Prostate gland (tissue), 2 donors: ENCODE measurements at regions of chr6 and their contacts with region 1.

Region 1: DNA sequence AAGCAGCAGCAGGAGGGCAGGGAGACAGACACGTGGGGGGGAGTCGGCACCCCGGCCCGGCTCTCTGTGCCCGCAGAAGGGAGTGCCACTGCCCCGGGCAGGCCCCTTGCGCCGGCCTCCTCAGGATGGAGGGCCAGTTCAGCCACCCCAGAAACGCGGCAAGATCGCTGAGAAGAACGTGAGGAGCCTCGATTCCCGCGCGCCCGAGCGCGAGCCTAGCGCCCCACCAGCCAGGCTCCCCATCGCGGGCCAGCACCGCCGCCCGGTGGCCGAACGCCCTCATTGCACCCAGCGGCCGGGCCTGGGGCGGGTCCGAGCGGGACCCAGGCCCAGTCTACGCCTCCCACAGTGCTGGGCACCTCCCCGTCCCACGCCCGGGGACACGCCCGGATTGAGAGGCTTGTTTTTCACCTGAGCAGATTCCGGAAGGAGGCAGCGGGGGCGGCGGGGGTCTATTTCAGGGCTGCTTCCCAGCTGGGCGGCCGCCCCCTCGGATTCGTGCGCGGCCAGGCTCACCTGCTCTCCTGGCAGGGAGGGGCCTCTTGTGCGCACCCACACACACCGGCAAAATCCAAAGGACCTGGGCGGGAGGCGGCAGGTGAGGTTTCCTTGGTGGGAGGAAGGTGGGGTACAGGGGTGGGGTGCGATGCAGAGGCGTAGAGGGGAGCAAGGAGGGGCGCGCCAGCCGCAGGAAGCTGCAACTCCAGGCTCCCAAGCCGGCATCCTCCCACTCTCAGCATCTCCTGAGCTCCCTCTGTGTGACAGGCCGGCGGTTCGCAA is 9.0 kb upstream of the GRM4 start:
- DNase-seq: no peak
- H3K4me3 ChIP-seq: no peak overlapping the region
- H3K27ac ChIP-seq: no peak overlapping the region
- H3K4me1 ChIP-seq: no peaks in the 10 kb centered on the region
- H3K27me3 ChIP-seq: no peaks in the 10 kb centered on the region
- CTCF ChIP-seq: peak; percentile 84 to 98 (median 97)
- POLR2A ChIP-seq: no peak

Region 2: DNA sequence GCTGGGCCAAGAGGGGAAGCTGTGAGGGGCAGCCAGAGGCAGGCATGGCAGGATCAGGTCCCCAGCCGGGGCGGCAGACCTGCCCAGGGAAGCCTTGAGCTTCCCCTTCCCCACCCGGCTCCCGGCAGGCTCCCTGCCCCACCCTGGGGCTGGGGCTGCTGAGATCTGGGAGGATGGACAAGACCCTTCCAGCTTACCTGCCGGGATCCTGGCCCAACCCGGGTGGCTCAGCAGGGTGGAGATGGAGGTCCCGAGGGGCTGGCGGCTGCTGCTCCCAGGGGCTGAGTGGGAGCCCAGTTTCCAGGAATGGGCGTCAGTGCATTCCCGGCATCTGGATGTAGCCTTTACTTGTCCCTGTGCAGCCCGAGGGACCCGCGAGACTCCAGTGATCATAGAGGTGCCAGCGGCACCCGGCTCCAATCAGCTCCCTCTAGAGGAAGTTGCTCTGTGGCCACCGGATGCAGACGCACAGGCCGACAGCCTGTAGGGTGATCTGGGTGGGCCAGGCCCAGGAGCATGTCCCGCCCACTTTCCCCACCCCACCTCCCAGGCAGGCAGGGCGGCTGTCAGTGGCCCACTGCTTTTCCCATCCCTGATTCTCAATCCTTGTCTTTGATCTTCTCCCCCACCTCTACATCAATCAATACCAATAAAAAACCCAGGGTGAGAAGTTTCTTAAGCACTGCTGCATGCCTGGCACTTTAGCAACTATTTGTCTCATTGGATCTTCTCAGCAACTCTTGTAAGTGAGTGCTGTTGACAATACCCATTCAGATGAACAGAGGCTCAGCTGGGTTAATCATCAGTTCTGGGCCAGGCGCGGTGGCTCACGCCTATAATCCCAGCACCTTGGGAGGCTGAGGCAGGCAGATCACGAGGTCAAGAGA is 574.8 kb before region 1 on chr6 and contains the start of gene BAK1:
- intact Hi-C with region 1: loop called (anchors 5 kb)
- DNase-seq: peak; percentile 88
- H3K4me3 ChIP-seq: peak within 1 kb of the TSS; percentile 54 to 70
- H3K27ac ChIP-seq: peak within 1 kb of the TSS; percentile 68 to 70
- H3K4me1 ChIP-seq: no peaks in the 10 kb centered on the region
- H3K27me3 ChIP-seq: no peaks in the 10 kb centered on the region
- CTCF ChIP-seq: peak in 3 of 4 experiments; percentile 42 to 75 (median 70)
- POLR2A ChIP-seq: peak; percentile 85
- total RNA-seq, gene BAK1: 6.2 to 13.6 TPM

Region 3: DNA sequence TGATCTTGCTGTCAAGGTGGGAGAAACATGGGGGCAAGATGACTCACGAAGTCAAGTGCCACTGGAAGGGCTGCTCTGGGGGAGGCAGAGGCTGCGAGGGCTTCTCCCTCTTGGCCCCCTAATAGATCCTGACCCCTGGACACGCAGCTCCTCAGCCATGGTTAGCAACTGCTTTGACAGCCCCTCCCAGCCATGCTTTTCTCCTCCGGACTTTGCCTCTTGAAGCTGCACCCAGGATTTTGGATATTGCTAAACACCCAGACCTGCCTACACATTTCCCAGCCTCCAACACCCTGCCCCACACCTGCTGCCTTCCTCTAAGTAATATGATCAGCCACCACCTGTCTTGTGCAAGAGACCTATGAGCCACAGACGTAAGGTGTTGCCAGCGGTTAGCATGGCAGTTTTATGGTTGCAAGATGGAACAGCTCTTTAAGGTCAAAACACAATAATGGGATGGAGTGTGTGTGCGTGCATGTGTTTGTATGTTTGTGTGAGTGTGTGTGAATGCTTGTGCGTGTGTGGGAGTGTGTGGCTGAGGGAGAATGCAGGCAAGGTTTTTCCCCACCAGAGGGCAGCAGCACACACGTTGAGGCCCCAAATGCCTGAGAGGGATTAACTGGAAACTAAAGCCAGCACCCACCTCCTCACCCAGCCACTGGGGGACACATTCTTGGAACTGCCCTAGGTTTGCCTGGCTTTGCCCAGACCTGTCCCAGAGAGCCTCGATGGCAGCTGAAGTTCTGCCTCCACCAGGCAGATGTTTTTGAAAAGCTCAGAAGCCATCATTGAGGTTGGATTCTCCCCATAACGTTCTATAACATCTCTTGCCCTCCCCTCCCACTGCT is 410.6 kb before region 1 on chr6:
- intact Hi-C with region 1: loop called (anchors 5 kb)
- DNase-seq: peak; percentile 85
- H3K4me3 ChIP-seq: no peak overlapping the region
- H3K27ac ChIP-seq: peak overlapping the region; percentile 74 to 85
- H3K4me1 ChIP-seq: peaks cover 26% of the 10 kb centered on the region
- H3K27me3 ChIP-seq: no peaks in the 10 kb centered on the region
- CTCF ChIP-seq: peak; percentile 78 to 95 (median 92)
- POLR2A ChIP-seq: no peak

Region 4: DNA sequence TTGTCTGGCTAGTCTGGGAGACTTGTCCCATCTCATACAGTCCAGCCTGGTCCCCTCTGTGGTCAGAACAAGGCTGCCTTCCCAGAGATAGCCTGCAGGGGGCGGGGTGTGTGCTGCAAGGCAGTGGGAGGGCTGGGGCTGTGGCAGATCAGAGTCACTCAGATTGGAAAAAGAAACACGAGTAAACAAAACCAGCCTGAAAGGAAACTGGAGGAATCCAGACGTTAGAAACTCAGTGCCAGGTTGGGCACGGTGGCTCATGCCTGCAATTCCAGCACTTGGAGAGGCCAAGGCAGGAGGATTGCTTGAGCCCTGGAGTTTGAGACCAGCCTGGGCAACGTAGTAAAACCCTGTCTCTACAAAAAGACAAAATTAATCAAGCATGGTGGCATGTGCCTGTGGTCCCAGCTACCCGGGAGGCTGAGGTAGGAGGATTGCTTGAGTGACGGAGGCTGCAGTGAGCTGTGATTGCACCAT is 386.2 kb before region 1 on chr6:
- intact Hi-C with region 1: loop called (anchors 5 kb)
- DNase-seq: peak; percentile 79
- H3K4me3 ChIP-seq: no peak overlapping the region
- H3K27ac ChIP-seq: peak overlapping the region; percentile 26 to 75
- H3K4me1 ChIP-seq: peaks cover 30% of the 10 kb centered on the region
- H3K27me3 ChIP-seq: no peaks in the 10 kb centered on the region
- CTCF ChIP-seq: peak; percentile 34 to 81 (median 78)
- POLR2A ChIP-seq: no peak

Region 5: DNA sequence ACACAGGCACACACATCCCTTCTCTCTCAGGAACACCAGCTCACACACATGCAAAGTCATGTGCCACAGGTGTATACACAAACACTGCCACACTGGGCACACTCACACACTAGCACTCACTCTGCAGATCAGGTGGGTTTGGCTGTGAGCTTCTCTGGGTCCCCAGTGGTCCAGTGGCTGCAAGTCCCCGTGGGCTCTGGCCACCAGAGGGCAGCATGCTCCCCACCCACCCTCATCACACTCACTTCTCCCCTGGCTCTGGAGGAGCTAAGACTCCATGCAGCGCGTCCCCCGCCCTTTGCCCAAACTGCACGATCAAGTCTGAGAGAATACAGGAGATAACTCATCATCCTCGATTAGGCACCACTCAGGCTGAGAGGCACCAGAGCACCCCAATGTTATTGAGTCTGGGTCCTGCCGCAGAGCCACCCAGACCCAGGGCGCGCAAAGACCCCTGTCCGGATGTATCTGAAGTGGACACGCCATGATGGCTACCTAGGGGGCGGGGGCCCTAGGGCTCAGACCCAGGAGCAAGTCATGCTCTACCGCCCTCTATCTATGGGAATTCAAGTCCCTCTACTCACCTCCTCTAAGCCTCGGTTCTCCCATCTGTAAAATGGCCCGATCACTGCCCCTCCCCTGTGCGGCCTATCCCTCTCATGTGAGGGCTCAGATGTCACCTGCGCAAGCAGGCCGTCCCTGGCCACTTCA is 99.5 kb before region 1 on chr6:
- intact Hi-C with region 1: loop called (anchors 5 kb)
- DNase-seq: peak; percentile 39
- H3K4me3 ChIP-seq: no peak overlapping the region
- H3K27ac ChIP-seq: no peak overlapping the region
- H3K4me1 ChIP-seq: no peaks in the 10 kb centered on the region
- H3K27me3 ChIP-seq: no peaks in the 10 kb centered on the region
- CTCF ChIP-seq: peak; percentile 50 to 74 (median 56)
- POLR2A ChIP-seq: no peak

Region 6: GRCh38 chr6:34182751-34183531 is 28.1 kb after region 1 on chr6:
- intact Hi-C with region 1: no loop called
- DNase-seq: no peak
- H3K4me3 ChIP-seq: no peak overlapping the region
- H3K27ac ChIP-seq: no peak overlapping the region
- H3K4me1 ChIP-seq: peaks cover 3% of the 10 kb centered on the region
- H3K27me3 ChIP-seq: no peaks in the 10 kb centered on the region
- CTCF ChIP-seq: no peak
- POLR2A ChIP-seq: no peak